Breast epithelium (tissue), 4 donors: ENCODE measurements at regions of chr2 and their contacts with region 1.

Region 1: GRCh38 chr2:158217593-158217992 is 115.9 kb downstream of the UPP2 start:
- DNase-seq: no peak
- H3K4me3 ChIP-seq: no peak overlapping the region
- H3K27ac ChIP-seq: no peak overlapping the region
- H3K4me1 ChIP-seq: no peaks in the 10 kb centered on the region
- H3K27me3 ChIP-seq: no peaks in the 10 kb centered on the region
- CTCF ChIP-seq: no peak
- POLR2A ChIP-seq: no peak

Region 2: DNA sequence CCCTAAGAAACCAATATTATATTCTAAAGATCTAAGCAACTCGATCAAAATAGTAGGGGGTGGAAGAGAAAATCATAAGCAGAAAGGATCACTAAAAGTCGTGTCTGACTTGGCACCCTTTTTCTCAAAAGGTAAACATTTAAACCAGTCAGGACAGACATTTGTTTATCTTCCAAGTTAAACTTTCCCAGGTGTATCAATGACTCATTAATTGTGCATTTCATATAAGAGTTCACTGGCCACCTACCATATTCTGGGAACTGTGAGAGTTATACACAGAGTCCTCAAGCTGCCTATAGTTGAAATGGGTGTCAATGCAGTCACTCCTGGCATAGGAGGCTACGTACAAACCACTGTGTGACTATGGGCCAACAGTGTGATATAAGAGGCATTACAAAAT is 336.7 kb before region 1 on chr2:
- intact Hi-C with region 1: loop called (anchors 5 kb)
- DNase-seq: no peak
- H3K4me3 ChIP-seq: no peak overlapping the region
- H3K27ac ChIP-seq: no peak overlapping the region
- H3K4me1 ChIP-seq: no peaks in the 10 kb centered on the region
- H3K27me3 ChIP-seq: no peaks in the 10 kb centered on the region
- CTCF ChIP-seq: no peak
- POLR2A ChIP-seq: no peak

Region 3: GRCh38 chr2:158253170-158253569 is 35.6 kb after region 1 on chr2:
- intact Hi-C with region 1: no loop called
- DNase-seq: no peak
- H3K4me3 ChIP-seq: no peak overlapping the region
- H3K27ac ChIP-seq: no peak overlapping the region
- H3K4me1 ChIP-seq: no peaks in the 10 kb centered on the region
- H3K27me3 ChIP-seq: no peaks in the 10 kb centered on the region
- CTCF ChIP-seq: no peak
- POLR2A ChIP-seq: no peak